Calu3 (cell line): ENCODE measurements at regions of chr9 and their contacts with region 1.

Region 1: DNA sequence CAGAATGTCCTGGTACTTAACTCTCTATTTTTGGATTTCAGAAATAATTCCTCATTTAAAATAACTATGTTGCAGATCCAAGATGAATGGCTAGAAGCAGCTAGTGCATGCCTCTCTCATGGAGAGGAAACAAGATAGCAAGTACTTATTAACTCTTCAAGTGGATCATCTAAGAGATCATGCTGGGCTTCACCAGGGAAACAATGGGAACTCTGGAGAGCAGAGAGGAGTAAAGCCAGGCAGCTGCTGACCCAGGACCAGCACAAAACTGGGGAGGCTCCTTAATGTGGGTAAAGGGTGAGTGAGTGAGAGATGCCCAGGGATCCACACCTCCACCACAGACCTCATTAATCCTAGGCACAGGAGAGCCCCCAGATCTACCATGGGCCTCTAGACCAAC is 897.8 kb upstream of the ACO1 start:
- DNase-seq: no peak
- H3K4me3 Mint-ChIP-seq: no peak overlapping the region
- H3K27ac Mint-ChIP-seq: no peak overlapping the region
- H3K4me1 Mint-ChIP-seq: no peaks in the 10 kb centered on the region
- H3K27me3 Mint-ChIP-seq: no peaks in the 10 kb centered on the region
- CTCF ChIP-seq: no peak

Region 2: DNA sequence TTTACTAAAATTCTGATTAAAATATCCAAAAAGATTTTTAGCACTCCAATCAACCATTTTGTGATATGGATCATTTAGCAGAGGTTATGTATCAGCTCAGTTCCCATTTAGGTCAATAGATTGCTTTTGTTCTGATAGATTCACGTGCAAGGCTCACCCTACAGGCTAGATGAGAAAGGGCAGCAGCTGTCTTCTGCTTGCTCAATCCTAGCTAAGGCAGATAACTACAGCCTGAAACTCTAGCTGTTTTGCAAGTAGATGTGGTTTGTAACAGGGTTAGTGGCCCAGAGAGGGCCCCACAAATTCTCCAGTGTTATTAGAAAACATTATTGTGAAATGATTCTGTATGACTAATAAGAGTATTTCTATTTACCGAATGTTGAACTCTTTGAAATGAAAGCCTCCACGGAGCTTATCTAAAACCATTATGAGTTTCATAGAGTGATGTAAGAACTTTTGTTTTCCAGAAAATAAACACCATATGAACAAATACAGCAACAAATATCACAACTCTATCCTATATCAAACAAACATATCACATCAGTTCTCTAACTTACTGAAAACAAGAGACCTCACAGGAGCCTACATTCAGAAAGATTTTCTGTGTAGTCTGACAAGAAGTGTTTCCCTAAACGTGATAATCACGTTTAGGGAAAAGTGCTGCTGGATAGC is 55.9 kb after region 1 on chr9:
- CTCF ChIA-PET with region 1: no interaction called
- intact Hi-C with region 1: loop called (anchors 10 kb)
- DNase-seq: peak; percentile 16
- H3K4me3 Mint-ChIP-seq: no peak overlapping the region
- H3K27ac Mint-ChIP-seq: no peak overlapping the region
- H3K4me1 Mint-ChIP-seq: no peaks in the 10 kb centered on the region
- H3K27me3 Mint-ChIP-seq: no peaks in the 10 kb centered on the region
- CTCF ChIP-seq: no peak

Region 3: GRCh38 chr9:31854187-31854586 is 367.6 kb after region 1 on chr9:
- CTCF ChIA-PET with region 1: no interaction called
- intact Hi-C with region 1: no loop called
- DNase-seq: no peak
- H3K4me3 Mint-ChIP-seq: no peak overlapping the region
- H3K27ac Mint-ChIP-seq: no peak overlapping the region
- H3K4me1 Mint-ChIP-seq: no peaks in the 10 kb centered on the region
- H3K27me3 Mint-ChIP-seq: no peaks in the 10 kb centered on the region
- CTCF ChIP-seq: no peak